Panc1 (cell line): ENCODE measurements at regions of chr6 and their contacts with region 1.

Region 1: GRCh38 chr6:116876635-116877611 is at the start of gene RFX6:
- DNase-seq: no peak
- ATAC-seq: peak; percentile 76
- H3K4me3 ChIP-seq: peak within 1 kb of the TSS; percentile 22 to 49
- H3K27ac ChIP-seq: no peak within 1 kb of the TSS
- H3K4me1 ChIP-seq: peaks cover 13% of the 10 kb centered on the region
- H3K27me3 ChIP-seq: peaks cover 60% of the 10 kb centered on the region
- CTCF ChIP-seq: no peak
- total RNA-seq, gene RFX6: not detected

Region 2: GRCh38 chr6:116737004-116737403 is 139.9 kb before region 1 on chr6:
- CTCF ChIA-PET with region 1: no interaction called
- POLR2A ChIA-PET with region 1: no interaction called
- in situ Hi-C with region 1: no loop called
- intact Hi-C with region 1: no loop called
- DNase-seq: no peak
- ATAC-seq: no peak
- H3K4me3 ChIP-seq: no peak overlapping the region
- H3K27ac ChIP-seq: no peak overlapping the region
- H3K4me1 ChIP-seq: no peaks in the 10 kb centered on the region
- H3K27me3 ChIP-seq: no peaks in the 10 kb centered on the region
- CTCF ChIP-seq: no peak

Region 3: DNA sequence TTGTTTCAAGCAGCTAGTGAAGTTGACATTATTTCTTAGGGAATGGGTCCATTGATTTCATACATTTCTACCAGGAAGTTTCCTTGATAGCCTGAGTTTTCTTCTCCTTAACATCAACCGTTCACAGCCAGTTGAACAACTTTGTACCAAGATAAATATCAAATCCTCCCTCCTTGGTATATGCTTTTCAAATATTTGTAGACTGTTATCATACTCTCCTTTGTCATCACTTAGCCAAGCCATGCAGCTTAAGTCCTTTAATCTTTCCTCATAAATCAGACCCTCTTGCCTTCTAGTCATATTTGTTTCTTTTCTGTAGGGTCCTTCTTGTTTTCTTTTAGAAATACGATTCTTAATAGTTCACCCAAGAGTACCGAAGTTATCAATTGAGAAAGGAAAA is 25.7 kb after region 1 on chr6:
- CTCF ChIA-PET with region 1: no interaction called
- POLR2A ChIA-PET with region 1: no interaction called
- in situ Hi-C with region 1: no loop called
- intact Hi-C with region 1: no loop called
- DNase-seq: no peak
- ATAC-seq: no peak
- H3K4me3 ChIP-seq: no peak overlapping the region
- H3K27ac ChIP-seq: no peak overlapping the region
- H3K4me1 ChIP-seq: no peaks in the 10 kb centered on the region
- H3K27me3 ChIP-seq: no peaks in the 10 kb centered on the region
- CTCF ChIP-seq: no peak

Region 4: GRCh38 chr6:117317261-117317660 is 440.3 kb after region 1 on chr6:
- CTCF ChIA-PET with region 1: no interaction called
- POLR2A ChIA-PET with region 1: no interaction called
- in situ Hi-C with region 1: no loop called
- intact Hi-C with region 1: loop called (anchors 5 kb)
- DNase-seq: peak; percentile 20
- ATAC-seq: peak; percentile 72; the same call in 1 of the 2 replicates
- H3K4me3 ChIP-seq: no peak overlapping the region
- H3K27ac ChIP-seq: no peak overlapping the region
- H3K4me1 ChIP-seq: no peaks in the 10 kb centered on the region
- H3K27me3 ChIP-seq: peaks cover 2% of the 10 kb centered on the region; the same call in 1 of the 2 replicates
- CTCF ChIP-seq: peak; percentile 68